GM12878 (cell line): ENCODE measurements at regions of chr13 and their contacts with region 1.

Region 1: DNA sequence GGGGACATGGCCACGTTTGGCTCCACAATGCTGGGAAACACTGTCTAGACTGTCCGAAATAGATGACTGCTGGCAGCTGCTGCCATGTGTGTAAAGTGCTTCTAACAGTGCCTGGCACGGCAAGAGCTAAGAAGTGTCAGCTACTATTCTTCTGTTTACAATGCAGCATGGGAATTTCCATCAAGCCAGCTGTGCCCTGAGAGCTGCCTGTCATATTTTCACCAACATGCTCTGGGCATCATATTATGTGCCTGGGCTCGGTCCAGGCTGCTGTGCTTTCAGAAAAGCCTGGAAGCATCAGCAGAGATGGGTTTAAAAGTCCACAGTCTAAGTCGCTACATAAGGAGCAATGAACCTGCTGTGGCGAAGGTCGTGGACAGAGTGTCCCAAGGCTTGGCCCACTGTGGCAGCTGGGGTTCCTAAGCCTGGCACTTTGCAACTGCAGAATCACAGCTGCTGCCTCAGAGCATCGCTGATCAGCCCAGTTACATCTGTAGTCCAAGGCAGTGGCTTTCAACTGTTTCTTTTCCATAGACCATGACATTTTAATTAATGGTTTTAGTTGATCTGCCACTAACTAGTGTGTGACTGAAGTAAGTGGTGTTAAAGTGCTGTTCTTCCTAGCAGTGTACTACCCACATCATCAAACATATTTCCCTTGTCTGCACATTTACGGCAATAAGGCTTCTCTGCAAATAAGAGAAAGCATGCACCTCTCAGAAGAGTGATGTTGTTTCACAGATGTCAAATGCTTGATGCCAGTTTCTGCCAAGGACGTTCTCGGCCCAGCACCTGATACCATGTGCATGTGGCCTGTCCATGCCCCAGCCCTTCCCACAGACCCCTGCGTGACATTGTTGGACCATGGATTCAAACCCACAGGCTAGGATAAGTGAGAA is 95.7 kb upstream of the C1QTNF9B start:
- DNase-seq: peak; percentile 7
- ATAC-seq: peak; percentile 64
- H3K4me3 ChIP-seq: no peak overlapping the region
- H3K27ac ChIP-seq: no peak overlapping the region
- H3K4me1 ChIP-seq: peaks cover 3% of the 10 kb centered on the region; the same call in 1 of the 2 replicates
- H3K27me3 ChIP-seq: no peaks in the 10 kb centered on the region
- CTCF ChIP-seq: no peak
- EP300 ChIP-seq: no peak
- POLR2A ChIP-seq: no peak
- RAD21 ChIP-seq: no peak

Region 2: GRCh38 chr13:23279321-23279720 is 713.7 kb before region 1 on chr13:
- CTCF ChIA-PET with region 1: no interaction called
- POLR2A ChIA-PET with region 1: no interaction called
- RAD21 ChIA-PET with region 1: no interaction called
- SMC1A ChIA-PET with region 1: no interaction called
- in situ Hi-C with region 1: no loop called
- intact Hi-C with region 1: no loop called
- DNase-seq: no peak
- ATAC-seq: no peak
- H3K4me3 ChIP-seq: no peak overlapping the region
- H3K27ac ChIP-seq: no peak overlapping the region
- H3K4me1 ChIP-seq: no peaks in the 10 kb centered on the region
- H3K27me3 ChIP-seq: no peaks in the 10 kb centered on the region
- CTCF ChIP-seq: no peak
- EP300 ChIP-seq: no peak
- POLR2A ChIP-seq: no peak
- RAD21 ChIP-seq: no peak

Region 3: GRCh38 chr13:23752111-23753001 is 240.7 kb before region 1 on chr13:
- CTCF ChIA-PET with region 1: no interaction called
- POLR2A ChIA-PET with region 1: no interaction called
- RAD21 ChIA-PET with region 1: no interaction called
- SMC1A ChIA-PET with region 1: no interaction called
- in situ Hi-C with region 1: no loop called
- intact Hi-C with region 1: no loop called
- DNase-seq: peak; percentile 69
- ATAC-seq: peak; percentile 85
- H3K4me3 ChIP-seq: no peak overlapping the region
- H3K27ac ChIP-seq: peak overlapping the region; percentile 86
- H3K4me1 ChIP-seq: peaks cover 42% of the 10 kb centered on the region
- H3K27me3 ChIP-seq: no peaks in the 10 kb centered on the region
- CTCF ChIP-seq: no peak
- EP300 ChIP-seq: peak; percentile 33 to 74; a peak in 3 of 4 replicates
- POLR2A ChIP-seq: no peak
- RAD21 ChIP-seq: peak; percentile 29; the same call in 1 of the 2 replicates

Region 4: GRCh38 chr13:24005755-24006281 is 12.8 kb after region 1 on chr13:
- CTCF ChIA-PET with region 1: interaction called, 8 read pairs
- POLR2A ChIA-PET with region 1: interaction called, 5 read pairs
- RAD21 ChIA-PET with region 1: interaction called, 17 read pairs
- SMC1A ChIA-PET with region 1: interaction called, 26 read pairs
- in situ Hi-C with region 1: no loop called
- intact Hi-C with region 1: no loop called
- DNase-seq: peak; percentile 19
- ATAC-seq: peak; percentile 95
- H3K4me3 ChIP-seq: no peak overlapping the region
- H3K27ac ChIP-seq: no peak overlapping the region
- H3K4me1 ChIP-seq: no peaks in the 10 kb centered on the region
- H3K27me3 ChIP-seq: no peaks in the 10 kb centered on the region
- CTCF ChIP-seq: no peak
- EP300 ChIP-seq: peak; percentile 14 to 57; a peak in 1 of 4 replicates
- POLR2A ChIP-seq: no peak
- RAD21 ChIP-seq: no peak